ENCODE measurements at regions of chr7 and their contacts with region 1.

Region 1: GRCh38 chr7:142835487-142835886 is 19.4 kb upstream of the EPHB6 start:
- DNase-seq: no peak
- H3K4me3 ChIP-seq: no peak overlapping the region
- H3K27ac ChIP-seq: no peak overlapping the region
- H3K4me1 ChIP-seq: no peaks in the 10 kb centered on the region
- H3K27me3 ChIP-seq: no peaks in the 10 kb centered on the region; the same call in 1 of the 2 replicates
- CTCF ChIP-seq: no peak
- EP300 ChIP-seq: no peak
- RAD21 ChIP-seq: no peak

Region 2: DNA sequence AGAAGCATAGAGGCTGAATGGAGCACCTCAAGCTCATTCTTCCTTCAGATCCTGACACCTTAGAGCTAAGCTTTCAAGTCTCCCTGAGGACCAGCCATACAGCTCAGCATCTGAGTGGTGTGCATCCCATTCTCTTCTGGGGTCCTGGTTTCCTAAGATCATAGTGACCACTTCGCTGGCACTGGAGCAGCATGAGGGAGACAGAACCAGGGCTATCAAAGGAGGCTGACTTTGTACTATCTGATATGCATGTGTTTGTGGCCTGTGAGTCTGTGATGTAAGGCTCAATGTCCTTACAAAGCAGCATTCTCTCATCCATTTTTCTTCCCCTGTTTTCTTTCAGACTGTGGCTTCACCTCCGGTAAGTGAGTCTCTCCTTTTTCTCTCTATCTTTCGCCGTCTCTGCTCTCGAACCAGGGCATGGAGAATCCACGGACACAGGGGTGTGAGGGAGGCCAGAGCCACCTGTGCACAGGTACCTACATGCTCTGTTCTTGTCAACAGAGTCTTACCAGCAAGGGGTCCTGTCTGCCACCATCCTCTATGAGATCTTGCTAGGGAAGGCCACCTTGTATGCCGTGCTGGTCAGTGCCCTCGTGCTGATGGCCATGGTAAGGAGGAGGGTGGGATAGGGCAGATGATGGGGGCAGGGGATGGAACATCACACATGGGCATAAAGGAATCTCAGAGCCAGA is 33.7 kb before region 1 on chr7:
- CTCF ChIA-PET with region 1: no interaction called
- POLR2A ChIA-PET with region 1: no interaction called
- DNase-seq: no peak
- H3K4me3 ChIP-seq: no peak overlapping the region
- H3K27ac ChIP-seq: no peak overlapping the region
- H3K4me1 ChIP-seq: peaks cover 0 to 8% of the 10 kb centered on the region in 2 experiments; a peak in 1 of 4 replicates
- H3K27me3 ChIP-seq: peaks cover 30% of the 10 kb centered on the region
- CTCF ChIP-seq: no peak
- EP300 ChIP-seq: no peak
- RAD21 ChIP-seq: no peak

Region 3: DNA sequence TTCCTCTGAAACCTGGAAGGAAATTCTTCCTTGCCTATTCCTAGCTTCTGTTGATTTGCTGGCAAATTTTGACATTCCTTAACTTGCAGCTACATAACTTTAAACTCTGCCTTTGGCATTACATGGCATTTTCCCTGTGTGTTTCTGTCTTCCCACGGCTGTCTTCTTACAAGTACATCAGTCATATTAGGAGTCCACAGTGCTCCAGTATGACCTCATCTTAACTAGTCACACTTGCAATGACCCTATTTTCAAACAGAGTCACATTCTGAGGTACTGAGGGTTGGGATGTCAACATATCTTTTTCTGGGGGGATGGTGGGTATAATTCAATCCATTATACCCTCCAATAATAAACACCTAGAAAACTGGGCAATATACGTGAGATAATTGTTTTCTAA is 18.0 kb before region 1 on chr7:
- CTCF ChIA-PET with region 1: interaction called, 11 read pairs
- POLR2A ChIA-PET with region 1: no interaction called
- DNase-seq: no peak
- H3K4me3 ChIP-seq: no peak overlapping the region
- H3K27ac ChIP-seq: no peak overlapping the region
- H3K4me1 ChIP-seq: peaks cover 5 to 27% of the 10 kb centered on the region in 2 experiments; a peak in 3 of 4 replicates
- H3K27me3 ChIP-seq: peaks cover 10% of the 10 kb centered on the region; the same call in 1 of the 2 replicates
- CTCF ChIP-seq: no peak
- EP300 ChIP-seq: no peak
- RAD21 ChIP-seq: no peak